Left lung (tissue), 14 donors: ENCODE measurements at regions of chr14 and their contacts with region 1.

Region 1: DNA sequence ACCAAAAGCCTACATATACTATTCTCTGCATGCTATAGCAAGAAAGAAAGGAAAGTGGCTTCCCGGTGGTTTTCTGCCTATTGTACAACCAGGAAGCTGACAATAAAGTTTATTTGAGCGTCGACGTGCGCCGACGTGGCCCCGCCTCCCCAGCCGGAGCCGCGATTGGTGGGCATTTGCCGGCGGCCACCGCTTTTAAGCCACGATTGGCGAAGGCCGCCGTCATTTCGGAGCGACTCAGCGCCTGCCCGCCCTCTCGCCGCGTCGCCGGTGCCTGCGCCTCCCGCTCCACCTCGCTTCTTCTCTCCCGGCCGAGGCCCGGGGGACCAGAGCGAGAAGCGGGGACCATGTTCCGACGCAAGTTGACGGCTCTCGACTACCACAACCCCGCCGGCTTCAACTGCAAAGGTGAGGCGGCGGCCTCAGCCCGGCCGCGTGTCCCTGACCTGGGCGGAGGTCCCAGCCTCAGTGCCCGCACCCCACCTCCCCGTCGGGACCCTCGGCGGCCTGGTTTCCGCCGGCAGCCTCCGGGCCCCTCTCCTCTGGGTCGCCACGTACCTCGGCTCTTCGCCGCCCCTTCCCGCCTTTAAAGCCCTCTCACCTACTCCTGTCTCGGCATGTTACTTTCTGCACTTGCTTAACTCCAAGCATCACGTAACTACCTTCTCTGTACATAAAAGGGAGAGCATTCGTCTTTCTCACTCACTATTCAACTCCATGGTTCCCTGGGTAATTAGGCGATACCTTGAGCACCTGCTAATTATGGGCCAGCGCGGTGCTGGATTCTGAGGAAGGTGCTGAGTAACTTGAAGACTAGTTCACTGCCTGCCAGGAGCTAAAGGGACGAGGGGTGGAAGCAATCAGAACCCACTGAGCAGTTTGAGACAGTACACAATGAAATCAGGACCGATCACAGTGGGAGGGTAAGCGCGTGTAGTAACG is at the start of gene RTRAF:
- DNase-seq: peak; percentile 88 to 99 (median 96)
- ATAC-seq: peak; percentile 100
- H3K4me3 ChIP-seq: peak within 1 kb of the TSS; percentile 76 to 80
- H3K27ac ChIP-seq: peak within 1 kb of the TSS; percentile 75 to 89
- H3K4me1 ChIP-seq: peaks cover 6 to 40% of the 10 kb centered on the region in 2 donors
- H3K27me3 ChIP-seq: no peaks in the 10 kb centered on the region
- CTCF ChIP-seq: no peak
- polyA plus RNA-seq, gene RTRAF: 265 to 325 (median 274) TPM

Region 2: GRCh38 chr14:51269634-51270033 is 719.9 kb before region 1 on chr14:
- intact Hi-C with region 1: loop called in 1 of 2 experiments (anchors 10 kb)
- DNase-seq: no peak
- ATAC-seq: no peak
- H3K4me3 ChIP-seq: no peak overlapping the region
- H3K27ac ChIP-seq: no peak overlapping the region
- H3K4me1 ChIP-seq: no peaks in the 10 kb centered on the region
- H3K27me3 ChIP-seq: no peaks in the 10 kb centered on the region
- CTCF ChIP-seq: no peak

Region 3: GRCh38 chr14:51780006-51780692 is 209.4 kb before region 1 on chr14:
- intact Hi-C with region 1: loop called in 1 of 2 experiments (anchors 10 kb)
- DNase-seq: peak; percentile 53 to 77 (median 61)
- ATAC-seq: peak; percentile 87
- H3K4me3 ChIP-seq: no peak overlapping the region
- H3K27ac ChIP-seq: no peak overlapping the region
- H3K4me1 ChIP-seq: peaks cover 0 to 11% of the 10 kb centered on the region in 2 donors
- H3K27me3 ChIP-seq: peaks cover 0 to 23% of the 10 kb centered on the region in 2 donors
- CTCF ChIP-seq: peak; percentile 82 to 88

Region 4: GRCh38 chr14:52155651-52156213 is 166.2 kb after region 1 on chr14:
- intact Hi-C with region 1: no loop called
- DNase-seq: peak in 1 of 4 donors; percentile 63
- ATAC-seq: no peak
- H3K4me3 ChIP-seq: no peak overlapping the region
- H3K27ac ChIP-seq: no peak overlapping the region
- H3K4me1 ChIP-seq: no peaks in the 10 kb centered on the region
- H3K27me3 ChIP-seq: no peaks in the 10 kb centered on the region
- CTCF ChIP-seq: no peak